Naive thymus-derived CD4-positive, alpha-beta T cell (primary cell): ENCODE measurements at regions of chr9 and their contacts with region 1.

Region 1: GRCh38 chr9:108834959-108835696 is 20.7 kb downstream of the ACTL7B start:
- DNase-seq: no peak
- ATAC-seq: no peak
- H3K4me3 ChIP-seq: no peak overlapping the region
- H3K4me3 Mint-ChIP-seq: no peak overlapping the region
- H3K27ac ChIP-seq: no peak overlapping the region
- H3K27ac Mint-ChIP-seq: no peak overlapping the region
- H3K4me1 ChIP-seq: no peaks in the 10 kb centered on the region
- H3K4me1 Mint-ChIP-seq: peaks cover 0 to 10% (median 0%) of the 10 kb centered on the region in 7 donors
- H3K27me3 ChIP-seq: no peaks in the 10 kb centered on the region
- H3K27me3 Mint-ChIP-seq: peaks cover 0 to 5% (median 0%) of the 10 kb centered on the region in 5 donors

Region 2: DNA sequence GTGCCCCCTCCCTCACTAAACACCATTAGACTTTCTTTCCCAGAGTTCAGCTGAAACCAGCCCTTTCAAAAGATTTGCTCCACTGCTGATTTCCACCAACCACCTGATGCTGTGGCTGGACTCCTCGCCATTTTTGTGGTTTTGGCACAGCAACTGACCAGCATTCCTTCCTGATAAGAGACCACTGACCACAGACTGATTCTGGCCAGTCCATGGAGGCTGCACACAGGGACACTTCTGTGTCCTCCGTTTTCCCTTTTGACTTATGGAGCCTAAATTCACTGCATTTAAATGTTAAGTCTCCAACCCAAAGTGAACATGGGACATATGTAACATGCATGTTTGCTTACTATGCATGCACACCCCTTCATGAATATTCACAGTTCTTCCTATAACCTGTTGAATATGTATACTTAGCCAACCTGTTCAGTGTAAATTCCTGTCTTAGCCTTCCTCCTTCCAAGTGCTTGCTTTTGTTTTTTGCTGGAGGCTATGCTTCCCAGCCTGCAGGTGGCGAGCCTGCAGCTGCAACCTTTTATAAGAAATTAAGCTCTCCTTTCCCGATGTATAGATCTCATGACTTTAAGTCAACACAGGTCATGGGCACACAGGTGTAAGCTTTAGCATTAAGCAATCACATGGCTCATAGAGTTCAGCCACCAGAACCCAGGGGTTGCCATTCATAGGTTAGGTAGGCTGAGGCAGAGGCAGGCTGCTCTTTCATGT is 58.0 kb before region 1 on chr9:
- CTCF ChIA-PET with region 1: no interaction called
- POLR2A ChIA-PET with region 1: no interaction called
- intact Hi-C with region 1: loop called in 1 of 2 experiments (anchors 10 kb)
- DNase-seq: no peak
- ATAC-seq: no peak
- H3K4me3 ChIP-seq: no peak overlapping the region
- H3K4me3 Mint-ChIP-seq: no peak overlapping the region
- H3K27ac ChIP-seq: no peak overlapping the region
- H3K27ac Mint-ChIP-seq: peak overlapping the region in 1 of 9 donors; percentile 60
- H3K4me1 ChIP-seq: no peaks in the 10 kb centered on the region
- H3K4me1 Mint-ChIP-seq: peaks cover 0 to 4% (median 0%) of the 10 kb centered on the region in 7 donors
- H3K27me3 ChIP-seq: no peaks in the 10 kb centered on the region
- H3K27me3 Mint-ChIP-seq: peaks cover 5 to 43% (median 28%) of the 10 kb centered on the region in 5 donors